Right ventricle myocardium inferior (tissue), 1 donor: ENCODE measurements at regions of chr20 and their contacts with region 1.

Region 1: DNA sequence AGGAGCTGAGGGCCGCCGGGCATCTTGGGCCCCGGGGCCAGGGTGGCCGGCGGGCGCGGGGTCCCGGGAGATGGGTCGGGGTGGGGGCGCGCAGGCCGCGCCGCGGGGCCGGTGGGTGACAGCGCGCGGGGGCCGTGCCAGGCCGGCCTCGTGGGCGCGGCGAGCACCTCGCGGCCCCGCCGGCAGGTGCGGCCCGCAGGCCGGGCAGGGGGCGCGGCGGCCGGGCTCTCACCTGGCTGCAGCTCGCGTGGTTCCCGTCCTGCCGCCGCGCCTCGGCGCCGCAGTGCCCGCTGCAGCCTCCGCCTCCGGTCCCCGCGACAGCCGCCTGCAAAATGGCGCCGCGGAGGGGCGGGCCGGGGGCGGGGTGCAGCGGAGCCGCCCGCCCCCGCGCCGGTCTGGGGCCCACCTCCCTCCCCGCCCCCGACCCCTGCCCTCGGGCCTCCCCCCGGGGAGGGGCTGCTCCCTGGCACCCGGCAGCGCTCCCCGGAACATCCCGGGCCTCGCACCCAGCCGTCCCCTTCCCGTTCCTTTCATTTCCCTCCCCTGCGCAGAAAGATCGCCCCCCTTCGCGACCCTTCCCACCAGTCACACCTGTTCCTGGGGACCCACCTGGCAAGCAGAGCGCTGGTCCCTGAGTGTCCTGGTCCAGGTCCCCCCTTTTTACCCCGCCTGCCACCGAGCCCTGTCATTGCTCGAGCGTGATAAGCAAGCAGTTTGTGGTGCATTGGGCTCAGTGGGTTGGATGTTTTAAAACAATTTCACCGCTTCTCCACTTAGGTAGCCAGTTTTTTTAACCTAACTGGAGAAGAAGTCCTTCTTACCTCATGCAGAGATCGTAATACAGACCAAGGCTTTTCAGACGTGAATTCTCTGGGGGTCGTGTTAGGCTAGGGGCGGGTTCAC is at the start of gene SLC23A2:
- DNase-seq: peak; percentile 86
- ATAC-seq: peak; percentile 77
- total RNA-seq, gene SLC23A2: 6.7 TPM

Region 2: DNA sequence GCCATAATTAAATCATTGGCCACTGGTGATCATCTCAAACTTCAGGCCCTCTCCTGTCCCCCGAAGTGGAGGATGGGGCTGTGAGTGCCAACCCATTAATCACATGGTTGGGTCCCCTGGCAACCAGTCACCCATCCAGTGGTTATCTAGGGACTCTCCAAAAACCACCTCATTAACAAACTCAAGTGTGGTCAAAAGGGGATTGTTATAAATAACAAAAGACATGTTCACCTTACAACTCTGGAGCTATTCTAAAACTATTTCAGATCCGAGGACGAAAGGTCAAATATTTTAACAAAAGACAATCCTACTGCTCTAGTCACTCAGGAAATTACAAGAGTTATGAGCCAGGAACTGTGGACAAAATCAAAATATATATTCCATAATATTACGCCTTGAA is 375.2 kb before region 1 on chr20:
- intact Hi-C with region 1: no loop called
- DNase-seq: no peak
- ATAC-seq: no peak

Region 3: GRCh38 chr20:4973330-4974097 is 27.9 kb before region 1 on chr20:
- intact Hi-C with region 1: no loop called
- DNase-seq: peak; percentile 67
- ATAC-seq: peak; percentile 20

Region 4: GRCh38 chr20:5078399-5078958 is 77.1 kb after region 1 on chr20:
- intact Hi-C with region 1: loop called (anchors 10 kb)
- DNase-seq: peak; percentile 82
- ATAC-seq: peak; percentile 70